Cardiac septum (tissue), 1 donor: ENCODE measurements at regions of chr7 and their contacts with region 1.

Region 1: DNA sequence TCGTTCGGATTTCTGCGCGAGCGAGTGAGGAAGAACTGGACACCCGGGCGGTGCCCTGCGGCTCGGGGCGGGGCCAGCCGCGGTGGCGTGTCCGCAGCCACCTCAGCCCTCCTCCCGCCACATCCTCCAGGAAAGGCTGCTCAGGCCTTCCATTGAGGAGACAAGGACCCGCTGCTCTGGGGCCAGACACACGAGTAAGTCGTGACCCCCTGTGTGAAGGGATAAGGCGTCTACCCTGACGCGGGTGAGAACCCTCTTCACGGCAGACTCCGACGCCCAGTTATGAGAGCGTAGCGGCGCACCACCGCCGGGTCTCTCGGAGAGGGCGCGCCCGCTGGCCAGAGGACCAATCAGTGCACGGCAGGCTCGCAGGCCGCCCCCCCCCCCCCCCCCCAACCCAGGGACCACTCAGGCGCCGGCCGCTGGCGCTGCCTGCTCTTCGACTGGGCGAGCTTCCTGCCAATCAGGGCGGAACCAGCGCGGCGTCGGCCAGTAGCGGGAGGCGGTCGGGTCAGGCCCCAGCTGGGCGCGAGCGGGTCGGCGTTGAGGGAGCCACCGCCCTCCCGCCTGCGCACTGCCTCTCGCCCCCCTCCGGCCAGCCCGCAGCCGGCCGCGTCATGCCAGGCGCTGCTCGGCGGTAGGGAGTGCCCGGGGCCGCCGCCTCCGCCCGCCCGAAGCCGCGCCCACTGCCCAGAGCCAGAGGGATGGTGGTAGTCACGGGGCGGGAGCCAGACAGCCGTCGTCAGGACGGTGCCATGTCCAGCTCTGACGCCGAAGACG is at the start of gene KCTD7:
- DNase-seq: peak; percentile 99
- total RNA-seq, gene KCTD7: 9.7 TPM

Region 2: GRCh38 chr7:66591799-66592596 is 36.6 kb before region 1 on chr7:
- intact Hi-C with region 1: loop called (anchors 2 kb)
- DNase-seq: peak; percentile 97